B cell (primary cell): ENCODE measurements at regions of chr1 and their contacts with region 1.

Region 1: GRCh38 chr1:2174348-2175054 is 20.1 kb downstream of the FAAP20 start:
- DNase-seq: peak; percentile 56
- ATAC-seq: no peak
- H3K4me3 ChIP-seq: no peak overlapping the region
- H3K4me3 Mint-ChIP-seq: no peak overlapping the region
- H3K27ac ChIP-seq: no peak overlapping the region
- H3K27ac Mint-ChIP-seq: no peak overlapping the region
- H3K4me1 ChIP-seq: peaks cover 0 to 4% of the 10 kb centered on the region in 2 donors
- H3K4me1 Mint-ChIP-seq: peaks cover 1% of the 10 kb centered on the region
- H3K27me3 ChIP-seq: no peaks in the 10 kb centered on the region
- H3K27me3 Mint-ChIP-seq: no peaks in the 10 kb centered on the region
- CTCF ChIP-seq: peak; percentile 61

Region 2: DNA sequence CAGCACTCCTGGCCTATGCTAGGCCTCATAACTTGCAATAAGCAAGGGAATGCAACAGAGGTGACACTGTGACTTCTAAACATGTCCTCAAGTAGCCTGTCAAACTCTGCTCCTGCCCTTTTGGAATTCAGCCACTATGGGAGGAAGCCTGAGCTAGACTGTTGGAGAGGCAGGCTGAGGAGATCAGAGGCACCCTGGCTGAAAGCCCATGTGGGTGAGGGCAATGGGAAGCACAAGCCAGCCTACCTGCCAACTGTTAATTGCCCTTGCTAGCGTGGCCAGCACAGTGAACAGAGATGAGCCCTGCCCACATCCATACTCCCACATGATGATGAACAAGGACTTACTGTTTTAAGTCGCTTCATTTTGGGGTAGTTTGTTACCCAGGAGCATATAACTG is 301.3 kb before region 1 on chr1:
- CTCF ChIA-PET with region 1: no interaction called
- POLR2A ChIA-PET with region 1: no interaction called
- intact Hi-C with region 1: no loop called
- DNase-seq: no peak
- ATAC-seq: no peak
- H3K4me3 ChIP-seq: no peak overlapping the region
- H3K4me3 Mint-ChIP-seq: no peak overlapping the region
- H3K27ac ChIP-seq: no peak overlapping the region
- H3K27ac Mint-ChIP-seq: peak overlapping the region; percentile 76
- H3K4me1 ChIP-seq: peaks cover 51 to 74% of the 10 kb centered on the region in 2 donors
- H3K4me1 Mint-ChIP-seq: peaks cover 76% of the 10 kb centered on the region
- H3K27me3 ChIP-seq: no peaks in the 10 kb centered on the region
- H3K27me3 Mint-ChIP-seq: no peaks in the 10 kb centered on the region
- CTCF ChIP-seq: no peak

Region 3: GRCh38 chr1:2091611-2092604 is 82.6 kb before region 1 on chr1:
- CTCF ChIA-PET with region 1: interaction called, 12 read pairs
- POLR2A ChIA-PET with region 1: no interaction called
- intact Hi-C with region 1: no loop called
- DNase-seq: peak; percentile 54
- ATAC-seq: peak; percentile 71
- H3K4me3 ChIP-seq: no peak overlapping the region
- H3K4me3 Mint-ChIP-seq: no peak overlapping the region
- H3K27ac ChIP-seq: no peak overlapping the region
- H3K27ac Mint-ChIP-seq: no peak overlapping the region
- H3K4me1 ChIP-seq: peaks cover 0 to 9% of the 10 kb centered on the region in 2 donors
- H3K4me1 Mint-ChIP-seq: peaks cover 5% of the 10 kb centered on the region
- H3K27me3 ChIP-seq: no peaks in the 10 kb centered on the region
- H3K27me3 Mint-ChIP-seq: no peaks in the 10 kb centered on the region
- CTCF ChIP-seq: peak; percentile 71

Region 4: GRCh38 chr1:2121101-2121691 is 53.3 kb before region 1 on chr1:
- CTCF ChIA-PET with region 1: no interaction called
- POLR2A ChIA-PET with region 1: no interaction called
- intact Hi-C with region 1: no loop called
- DNase-seq: no peak
- ATAC-seq: no peak
- H3K4me3 ChIP-seq: no peak overlapping the region
- H3K4me3 Mint-ChIP-seq: no peak overlapping the region
- H3K27ac ChIP-seq: no peak overlapping the region
- H3K27ac Mint-ChIP-seq: no peak overlapping the region
- H3K4me1 ChIP-seq: peaks cover 5 to 10% of the 10 kb centered on the region in 2 donors
- H3K4me1 Mint-ChIP-seq: peaks cover 31% of the 10 kb centered on the region
- H3K27me3 ChIP-seq: no peaks in the 10 kb centered on the region
- H3K27me3 Mint-ChIP-seq: no peaks in the 10 kb centered on the region
- CTCF ChIP-seq: no peak

Region 5: GRCh38 chr1:2936559-2937515 is 762.3 kb after region 1 on chr1:
- CTCF ChIA-PET with region 1: no interaction called
- POLR2A ChIA-PET with region 1: no interaction called
- intact Hi-C with region 1: loop called (anchors 10 kb)
- DNase-seq: no peak
- ATAC-seq: no peak
- H3K4me3 ChIP-seq: no peak overlapping the region
- H3K4me3 Mint-ChIP-seq: no peak overlapping the region
- H3K27ac ChIP-seq: no peak overlapping the region
- H3K27ac Mint-ChIP-seq: no peak overlapping the region
- H3K4me1 ChIP-seq: no peaks in the 10 kb centered on the region
- H3K4me1 Mint-ChIP-seq: no peaks in the 10 kb centered on the region
- H3K27me3 ChIP-seq: no peaks in the 10 kb centered on the region
- H3K27me3 Mint-ChIP-seq: no peaks in the 10 kb centered on the region
- CTCF ChIP-seq: no peak